ENCODE measurements at regions of chr14 and their contacts with region 1.

Region 1: GRCh38 chr14:61837336-61838229 is 75.4 kb downstream of the SNAPC1 start:
- DNase-seq: peak; percentile 84
- H3K4me3 ChIP-seq: no peak overlapping the region
- H3K27ac ChIP-seq: peak overlapping the region; percentile 72
- H3K4me1 ChIP-seq: peaks cover 34% of the 10 kb centered on the region
- H3K27me3 ChIP-seq: no peaks in the 10 kb centered on the region
- CTCF ChIP-seq: peak; percentile 85
- POLR2A ChIP-seq: no peak

Region 2: DNA sequence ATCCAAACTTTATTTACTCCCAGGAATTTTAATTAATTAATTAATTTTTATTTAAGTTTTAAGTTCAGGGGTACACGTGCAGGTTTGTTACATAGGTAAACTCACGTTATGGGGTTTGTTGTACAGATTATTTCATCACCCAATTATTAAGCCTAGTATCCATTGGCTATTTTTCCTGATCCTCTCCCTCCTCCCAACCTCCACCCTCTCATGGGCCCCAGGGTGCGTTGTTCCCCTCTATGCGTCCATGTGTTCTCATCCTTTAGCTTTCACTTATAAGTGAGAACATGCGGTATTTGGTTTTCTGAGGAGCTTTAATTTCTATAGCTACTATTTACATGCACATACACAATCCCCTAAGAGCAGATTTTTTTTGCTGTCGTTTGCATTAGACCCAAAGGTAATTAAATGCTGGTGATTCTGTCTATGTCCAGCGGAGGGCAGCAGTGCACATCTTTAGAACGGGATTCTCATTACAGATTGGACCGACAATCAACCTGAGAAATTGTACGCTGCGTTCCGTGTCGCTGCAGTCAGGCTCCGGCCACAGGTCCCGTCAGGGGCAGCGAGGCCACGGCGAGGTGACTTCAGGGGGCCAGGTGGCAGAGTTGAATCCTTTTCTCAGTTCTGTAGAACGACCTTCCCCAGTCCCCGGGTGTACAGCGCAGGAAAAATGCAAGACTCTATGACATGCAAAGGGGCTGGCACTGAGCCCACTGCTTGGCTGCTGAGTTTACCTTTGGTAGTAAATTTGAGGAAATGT is 568.1 kb before region 1 on chr14:
- CTCF ChIA-PET with region 1: interaction called, 6 read pairs
- POLR2A ChIA-PET with region 1: no interaction called
- dilution Hi-C with region 1: no loop called
- intact Hi-C with region 1: loop called (anchors 2 kb)
- DNase-seq: peak; percentile 90
- H3K4me3 ChIP-seq: peak overlapping the region in 2 of 3 experiments; percentile 33 to 39
- H3K27ac ChIP-seq: no peak overlapping the region
- H3K4me1 ChIP-seq: no peaks in the 10 kb centered on the region
- H3K27me3 ChIP-seq: peaks cover 15 to 17% of the 10 kb centered on the region in 2 experiments
- CTCF ChIP-seq: peak; percentile 66 to 71
- POLR2A ChIP-seq: no peak

Region 3: GRCh38 chr14:61461808-61462275 is 375.7 kb before region 1 on chr14:
- CTCF ChIA-PET with region 1: interaction called, 33 read pairs
- POLR2A ChIA-PET with region 1: no interaction called
- dilution Hi-C with region 1: no loop called
- intact Hi-C with region 1: loop called (anchors 1 kb)
- DNase-seq: peak; percentile 80
- H3K4me3 ChIP-seq: no peak overlapping the region
- H3K27ac ChIP-seq: no peak overlapping the region
- H3K4me1 ChIP-seq: peaks cover 26% of the 10 kb centered on the region
- H3K27me3 ChIP-seq: no peaks in the 10 kb centered on the region
- CTCF ChIP-seq: peak; percentile 35 to 43
- POLR2A ChIP-seq: no peak

Region 4: DNA sequence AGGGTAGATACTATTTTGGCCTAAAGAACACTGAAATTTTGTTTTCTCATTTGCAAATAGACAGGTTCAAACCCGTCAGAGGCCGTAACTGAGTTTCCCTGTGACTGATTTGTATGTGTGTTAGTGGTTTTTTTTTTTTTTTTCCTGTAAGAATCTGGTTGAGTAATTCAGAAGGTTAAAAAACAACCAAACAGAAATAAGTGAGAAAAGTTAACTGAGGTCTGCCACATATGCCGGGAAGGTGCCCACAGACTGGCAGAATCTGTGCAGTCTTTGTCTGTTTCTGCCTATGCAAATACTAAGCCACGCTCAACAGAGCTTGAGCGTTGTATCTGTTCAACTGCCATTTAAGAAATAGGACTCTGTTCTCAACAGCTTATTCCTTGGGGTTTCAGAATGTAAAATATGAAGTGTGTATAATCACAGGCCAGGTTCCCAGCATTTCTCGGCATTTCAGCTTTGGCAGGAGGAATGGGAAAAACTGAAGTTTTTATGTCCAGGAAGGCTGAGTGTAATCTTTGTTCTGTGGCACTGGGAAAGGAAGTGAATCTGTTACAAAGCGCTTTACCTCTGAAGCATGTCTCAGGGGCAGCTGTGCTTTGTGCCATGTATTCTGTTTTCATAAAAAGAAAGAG is 334.3 kb before region 1 on chr14:
- CTCF ChIA-PET with region 1: interaction called, 10 read pairs
- POLR2A ChIA-PET with region 1: no interaction called
- dilution Hi-C with region 1: no loop called
- intact Hi-C with region 1: no loop called
- DNase-seq: peak; percentile 93
- H3K4me3 ChIP-seq: peak overlapping the region in 1 of 3 experiments; percentile 15
- H3K27ac ChIP-seq: peak overlapping the region; percentile 81
- H3K4me1 ChIP-seq: peaks cover 27% of the 10 kb centered on the region
- H3K27me3 ChIP-seq: no peaks in the 10 kb centered on the region
- CTCF ChIP-seq: no peak
- POLR2A ChIP-seq: no peak

Region 5: DNA sequence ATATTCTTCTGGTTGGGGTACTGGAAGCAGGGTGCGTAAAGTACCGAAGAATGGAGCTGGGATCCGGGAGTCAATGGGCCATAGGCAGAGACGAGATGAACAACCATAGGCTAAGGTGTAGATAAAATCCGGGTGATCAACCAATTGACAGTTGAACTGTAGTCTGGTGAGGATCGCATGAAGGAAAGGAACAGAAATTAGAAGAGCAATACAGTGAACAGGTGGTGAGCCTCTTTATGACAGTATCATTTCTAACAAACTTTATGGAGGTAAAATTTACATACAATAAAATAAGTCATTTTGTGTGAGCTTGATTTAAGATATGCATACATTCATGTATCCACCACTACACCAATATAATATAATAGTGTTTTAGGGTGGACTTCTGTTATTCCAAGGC is 156.2 kb before region 1 on chr14:
- CTCF ChIA-PET with region 1: no interaction called
- POLR2A ChIA-PET with region 1: no interaction called
- dilution Hi-C with region 1: no loop called
- intact Hi-C with region 1: no loop called
- DNase-seq: no peak
- H3K4me3 ChIP-seq: no peak overlapping the region
- H3K27ac ChIP-seq: no peak overlapping the region
- H3K4me1 ChIP-seq: no peaks in the 10 kb centered on the region
- H3K27me3 ChIP-seq: no peaks in the 10 kb centered on the region
- CTCF ChIP-seq: no peak
- POLR2A ChIP-seq: no peak

Region 6: DNA sequence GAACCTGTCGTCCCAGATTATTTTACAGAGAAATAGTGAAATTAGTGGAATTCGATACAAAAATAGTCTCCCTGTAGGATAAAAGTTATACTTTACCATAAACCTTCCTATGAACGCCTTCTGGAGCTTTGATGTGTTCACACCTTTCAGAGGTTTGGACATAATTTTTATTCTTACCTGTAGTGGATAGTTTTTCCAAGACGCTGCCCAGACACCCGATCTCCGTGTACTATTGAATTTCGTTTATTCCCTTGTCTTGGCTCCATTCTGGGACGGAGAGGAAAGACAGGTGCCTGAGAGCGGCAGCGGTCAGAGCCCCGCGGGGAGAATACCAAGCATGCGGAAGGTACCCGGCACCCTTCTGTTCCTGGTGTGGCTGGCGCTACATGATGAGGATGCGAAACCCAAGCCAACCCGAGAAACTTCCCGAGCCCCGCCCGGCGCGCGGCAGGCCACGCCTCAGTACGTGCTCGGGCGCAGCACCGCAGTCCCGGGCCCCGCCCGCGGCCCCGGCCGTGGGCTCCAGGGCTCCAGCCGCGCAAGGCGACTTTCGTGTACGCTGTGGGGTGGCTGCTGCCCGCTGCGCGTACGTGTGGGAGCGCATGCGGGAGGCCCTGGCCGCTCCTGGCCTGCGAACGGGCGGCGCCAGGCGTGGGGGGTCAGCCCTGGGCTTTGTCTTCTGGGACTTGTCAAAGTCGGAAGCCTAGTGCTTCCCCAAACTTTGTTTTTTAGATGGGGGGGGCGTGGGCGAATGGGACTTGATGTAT is 86.7 kb before region 1 on chr14:
- CTCF ChIA-PET with region 1: interaction called, 20 read pairs
- POLR2A ChIA-PET with region 1: no interaction called
- dilution Hi-C with region 1: no loop called
- intact Hi-C with region 1: loop called (anchors 2 kb)
- DNase-seq: peak; percentile 82
- H3K4me3 ChIP-seq: peak overlapping the region; percentile 46 to 81 (median 72)
- H3K27ac ChIP-seq: peak overlapping the region; percentile 60
- H3K4me1 ChIP-seq: peaks cover 41% of the 10 kb centered on the region
- H3K27me3 ChIP-seq: no peaks in the 10 kb centered on the region
- CTCF ChIP-seq: no peak
- POLR2A ChIP-seq: peak; percentile 77

Region 7: GRCh38 chr14:61797309-61797708 is 40.3 kb before region 1 on chr14:
- CTCF ChIA-PET with region 1: interaction called, 12 read pairs
- POLR2A ChIA-PET with region 1: no interaction called
- dilution Hi-C with region 1: no loop called
- intact Hi-C with region 1: no loop called
- DNase-seq: no peak
- H3K4me3 ChIP-seq: no peak overlapping the region
- H3K27ac ChIP-seq: no peak overlapping the region
- H3K4me1 ChIP-seq: no peaks in the 10 kb centered on the region
- H3K27me3 ChIP-seq: no peaks in the 10 kb centered on the region
- CTCF ChIP-seq: no peak
- POLR2A ChIP-seq: no peak

Region 8: GRCh38 chr14:61812761-61813606 is 24.6 kb before region 1 on chr14:
- CTCF ChIA-PET with region 1: interaction called, 11 read pairs
- POLR2A ChIA-PET with region 1: no interaction called
- dilution Hi-C with region 1: no loop called
- intact Hi-C with region 1: no loop called
- DNase-seq: peak; percentile 29
- H3K4me3 ChIP-seq: peak overlapping the region in 2 of 3 experiments; percentile 37 to 44
- H3K27ac ChIP-seq: no peak overlapping the region
- H3K4me1 ChIP-seq: peaks cover 3% of the 10 kb centered on the region
- H3K27me3 ChIP-seq: peaks cover 18 to 34% of the 10 kb centered on the region in 2 experiments
- CTCF ChIP-seq: no peak
- POLR2A ChIP-seq: no peak